Activated CD8-positive, alpha-beta memory T cell treated with anti-CD3 and anti-CD28 coated beads, Interleukin-2, amount 10 ng/mL, durations not matched to agents 7 days and 5 days (primary cell): ENCODE measurements at regions of chr2 and their contacts with region 1.

Region 1: DNA sequence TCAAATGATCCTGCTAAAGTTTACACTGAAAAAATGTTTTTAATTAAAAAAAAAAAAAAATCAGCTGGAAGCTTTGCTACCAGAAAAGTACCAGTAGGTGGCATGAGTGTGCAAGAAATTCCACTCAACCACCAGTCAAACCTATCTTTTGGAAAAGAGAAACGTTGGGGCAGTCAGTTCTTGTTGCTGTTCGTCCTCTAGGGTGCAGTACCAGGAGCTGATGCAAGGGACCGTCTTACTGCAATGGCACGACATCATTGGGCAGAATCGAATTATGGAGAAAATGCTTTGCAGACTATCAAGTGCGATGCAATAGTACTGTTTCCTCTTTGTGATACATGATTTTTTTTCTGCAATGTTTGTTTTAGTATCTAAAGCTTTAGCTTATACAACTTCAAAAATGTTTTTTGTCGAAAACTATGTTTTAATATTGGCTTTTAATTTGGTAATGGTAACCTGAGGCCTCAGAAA is 18.3 kb downstream of the YPEL5 start:
- DNase-seq: peak; percentile 81
- ATAC-seq: peak; percentile 94
- H3K4me3 Mint-ChIP-seq: no peak overlapping the region
- H3K27ac Mint-ChIP-seq: no peak overlapping the region
- H3K4me1 Mint-ChIP-seq: peaks cover 13% of the 10 kb centered on the region
- H3K27me3 Mint-ChIP-seq: no peaks in the 10 kb centered on the region

Region 2: DNA sequence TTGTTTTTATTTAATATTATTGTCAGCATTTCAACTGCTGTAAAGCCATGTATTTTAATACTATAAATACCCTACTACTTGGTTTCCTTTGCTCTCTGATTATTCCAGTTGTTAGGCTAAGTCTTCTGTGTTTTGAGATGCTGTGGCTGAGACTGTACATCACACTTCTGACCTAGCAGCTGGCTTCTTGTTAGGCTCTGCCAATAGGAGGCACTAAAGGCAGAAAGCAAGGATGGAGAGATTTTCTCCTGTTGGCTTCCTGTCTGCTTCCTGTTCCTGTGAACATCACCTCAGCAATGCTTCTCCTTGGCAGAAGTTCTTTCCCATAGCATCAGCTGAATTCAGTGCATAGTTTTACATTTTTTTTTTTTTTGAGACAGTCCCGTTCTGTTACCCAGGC is 86.6 kb before region 1 on chr2:
- CTCF ChIA-PET with region 1: no interaction called
- DNase-seq: no peak
- ATAC-seq: no peak
- H3K4me3 Mint-ChIP-seq: no peak overlapping the region
- H3K27ac Mint-ChIP-seq: no peak overlapping the region
- H3K4me1 Mint-ChIP-seq: no peaks in the 10 kb centered on the region
- H3K27me3 Mint-ChIP-seq: peaks cover 29% of the 10 kb centered on the region

Region 3: GRCh38 chr2:30146438-30147147 is 18.5 kb before region 1 on chr2 and contains the start of gene YPEL5:
- CTCF ChIA-PET with region 1: interaction called, 127 read pairs
- DNase-seq: peak; percentile 99
- ATAC-seq: peak; percentile 91
- H3K4me3 Mint-ChIP-seq: peak within 1 kb of the TSS; percentile 82
- H3K27ac Mint-ChIP-seq: peak within 1 kb of the TSS; percentile 97
- H3K4me1 Mint-ChIP-seq: peaks cover 33% of the 10 kb centered on the region
- H3K27me3 Mint-ChIP-seq: no peaks in the 10 kb centered on the region
- total RNA-seq, gene YPEL5: 24.2 to 26.5 TPM

Region 4: GRCh38 chr2:30180226-30180625 is 15.1 kb after region 1 on chr2:
- CTCF ChIA-PET with region 1: interaction called, 11 read pairs
- DNase-seq: no peak
- ATAC-seq: no peak
- H3K4me3 Mint-ChIP-seq: no peak overlapping the region
- H3K27ac Mint-ChIP-seq: no peak overlapping the region
- H3K4me1 Mint-ChIP-seq: peaks cover 1% of the 10 kb centered on the region
- H3K27me3 Mint-ChIP-seq: peaks cover 2% of the 10 kb centered on the region

Region 5: GRCh38 chr2:30208452-30208851 is 43.4 kb after region 1 on chr2:
- CTCF ChIA-PET with region 1: interaction called, 35 read pairs
- DNase-seq: peak; percentile 54
- ATAC-seq: peak; percentile 70
- H3K4me3 Mint-ChIP-seq: no peak overlapping the region
- H3K27ac Mint-ChIP-seq: no peak overlapping the region
- H3K4me1 Mint-ChIP-seq: peaks cover 14% of the 10 kb centered on the region
- H3K27me3 Mint-ChIP-seq: peaks cover 2% of the 10 kb centered on the region

Region 6: GRCh38 chr2:30231212-30231995 is 66.3 kb after region 1 on chr2 and contains the start of gene LBH:
- CTCF ChIA-PET with region 1: interaction called, 18 read pairs
- DNase-seq: peak; percentile 88
- ATAC-seq: peak; percentile 48
- H3K4me3 Mint-ChIP-seq: peak within 1 kb of the TSS; percentile 73
- H3K27ac Mint-ChIP-seq: peak within 1 kb of the TSS; percentile 78
- H3K4me1 Mint-ChIP-seq: peaks cover 60% of the 10 kb centered on the region
- H3K27me3 Mint-ChIP-seq: peaks cover 12% of the 10 kb centered on the region
- total RNA-seq, gene LBH: 68.5 to 71.5 TPM

Region 7: DNA sequence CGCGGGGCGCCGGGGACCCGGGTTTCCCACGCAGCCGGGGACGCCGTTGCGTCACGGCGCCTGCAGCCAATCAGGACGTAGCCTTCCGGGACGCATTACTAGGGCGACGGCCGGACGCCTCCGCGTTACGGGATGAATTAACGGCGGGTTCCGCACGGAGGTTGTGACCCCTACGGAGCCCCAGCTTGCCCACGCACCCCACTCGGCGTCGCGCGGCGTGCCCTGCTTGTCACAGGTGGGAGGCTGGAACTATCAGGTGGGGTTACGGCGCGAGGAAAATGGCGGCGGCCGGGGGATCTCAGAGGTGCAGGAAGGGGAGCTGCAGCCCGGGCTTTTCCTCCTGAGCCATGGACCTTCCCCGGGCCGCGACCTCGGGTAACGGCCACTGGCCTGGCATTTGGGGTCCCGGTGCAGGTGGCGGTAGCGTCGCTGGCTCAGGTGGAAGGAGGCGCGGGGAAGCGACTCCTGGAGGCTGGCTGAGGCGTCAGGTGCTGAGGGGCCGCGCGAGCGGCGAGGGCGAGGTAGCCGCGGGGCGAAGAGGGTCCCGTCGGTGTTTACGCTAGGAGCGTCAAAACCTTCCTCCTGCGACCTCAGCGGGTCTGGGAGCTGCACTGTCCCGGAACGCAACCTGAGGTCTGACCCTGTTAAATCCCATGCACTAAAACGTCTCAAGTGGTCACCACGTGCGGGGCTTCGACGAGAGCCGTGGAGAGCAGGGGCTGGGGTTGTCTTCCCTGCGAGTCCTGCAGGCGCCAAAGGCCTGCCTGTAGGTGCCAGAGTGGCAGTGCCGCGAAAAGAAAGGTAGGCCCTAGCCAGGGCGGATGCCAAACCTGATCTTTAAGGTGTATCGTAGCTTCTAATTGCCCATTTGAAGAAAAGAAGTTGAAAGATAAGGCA is 282.3 kb after region 1 on chr2 and contains the start of gene LCLAT1:
- CTCF ChIA-PET with region 1: interaction called, 13 read pairs
- DNase-seq: peak; percentile 89
- ATAC-seq: peak; percentile 96
- H3K4me3 Mint-ChIP-seq: peak within 1 kb of the TSS; percentile 88
- H3K27ac Mint-ChIP-seq: peak within 1 kb of the TSS; percentile 92
- H3K4me1 Mint-ChIP-seq: peaks cover 23% of the 10 kb centered on the region
- H3K27me3 Mint-ChIP-seq: no peaks in the 10 kb centered on the region
- total RNA-seq, gene LCLAT1: 18.6 to 22.8 TPM